ENCODE measurements at regions of chr6 and their contacts with region 1.

Region 1: GRCh38 chr6:42260972-42261371 is 43.3 kb upstream of the MRPS10 start:
- DNase-seq: peak; percentile 79
- CTCF ChIP-seq: peak; percentile 64

Region 2: DNA sequence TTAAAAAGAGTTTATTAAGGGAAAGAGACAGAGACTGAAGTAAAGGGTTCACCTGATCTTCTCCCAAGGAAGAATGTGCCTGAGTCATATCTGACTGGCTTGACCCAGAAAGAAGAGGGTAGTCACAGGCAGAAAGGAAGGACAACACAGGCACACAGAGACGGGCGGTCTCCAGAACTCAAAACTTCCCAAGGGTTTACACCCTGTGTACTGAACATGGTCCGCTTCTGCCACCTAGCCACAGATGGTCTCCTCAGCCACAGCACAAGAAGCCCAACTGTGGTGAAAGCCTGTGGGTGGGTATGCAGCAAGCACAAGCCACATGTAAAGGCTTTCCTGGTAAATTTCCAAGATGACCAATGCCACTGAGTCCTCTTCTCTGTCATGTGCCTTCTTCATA is 1239.1 kb before region 1 on chr6:
- in situ Hi-C with region 1: no loop called
- DNase-seq: no peak
- CTCF ChIP-seq: peak; percentile 9

Region 3: GRCh38 chr6:42547407-42548329 is 286.7 kb after region 1 on chr6:
- in situ Hi-C with region 1: loop called (anchors 25 kb)
- DNase-seq: peak; percentile 92
- CTCF ChIP-seq: peak; percentile 99

Measured in GM13977 (cell line).